ENCODE measurements at regions of chr10 and their contacts with region 1.

Region 1: GRCh38 chr10:110931769-110932381 is 12.5 kb downstream of the SHOC2 start:
- DNase-seq: no peak
- H3K4me3 ChIP-seq: no peak overlapping the region
- H3K4me3 Mint-ChIP-seq: no peak overlapping the region
- H3K27ac ChIP-seq: no peak overlapping the region
- H3K27ac Mint-ChIP-seq: no peak overlapping the region
- H3K4me1 ChIP-seq: peaks cover 52% of the 10 kb centered on the region
- H3K4me1 Mint-ChIP-seq: peaks cover 13 to 26% (median 22%) of the 10 kb centered on the region in 4 donors
- H3K27me3 ChIP-seq: no peaks in the 10 kb centered on the region
- H3K27me3 Mint-ChIP-seq: no peaks in the 10 kb centered on the region

Region 2: DNA sequence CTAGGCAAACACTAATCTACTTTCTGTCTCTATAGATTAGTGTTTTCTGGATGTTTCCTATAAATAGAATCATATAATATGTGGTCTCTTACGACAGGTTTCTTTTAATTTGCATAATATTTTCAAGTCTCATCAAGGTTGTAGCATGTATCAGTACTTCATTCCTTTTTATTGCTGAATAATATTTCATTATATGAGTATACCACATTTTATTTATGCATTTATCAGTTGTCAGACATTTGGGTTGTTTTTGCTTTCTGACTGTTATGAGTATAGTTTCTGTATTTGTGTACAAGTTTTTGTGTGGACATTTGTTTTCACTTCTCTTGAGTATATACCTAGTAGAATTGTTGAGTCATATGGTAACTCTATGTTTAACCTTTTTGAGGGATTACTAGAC is 35.8 kb after region 1 on chr10:
- CTCF ChIA-PET with region 1: no interaction called
- POLR2A ChIA-PET with region 1: no interaction called
- intact Hi-C with region 1: loop called (anchors 5 kb)
- DNase-seq: no peak
- H3K4me3 ChIP-seq: no peak overlapping the region
- H3K4me3 Mint-ChIP-seq: no peak overlapping the region
- H3K27ac ChIP-seq: no peak overlapping the region
- H3K27ac Mint-ChIP-seq: peak overlapping the region in 1 of 7 donors; percentile 18
- H3K4me1 ChIP-seq: peaks cover 51% of the 10 kb centered on the region
- H3K4me1 Mint-ChIP-seq: peaks cover 45 to 69% (median 52%) of the 10 kb centered on the region in 4 donors
- H3K27me3 ChIP-seq: no peaks in the 10 kb centered on the region
- H3K27me3 Mint-ChIP-seq: no peaks in the 10 kb centered on the region